Activated CD4-positive, alpha-beta memory T cell treated with anti-CD3 and anti-CD28 coated beads, Interleukin-2, amount 10 ng/mL, durations not matched to agents 7 days and 5 days (primary cell): ENCODE measurements at regions of chr3 and their contacts with region 1.

Region 1: GRCh38 chr3:14203521-14204079 is 25.0 kb downstream of the LSM3 start:
- DNase-seq: peak; percentile 48
- H3K4me3 Mint-ChIP-seq: no peak overlapping the region
- H3K27ac Mint-ChIP-seq: no peak overlapping the region
- H3K4me1 Mint-ChIP-seq: no peaks in the 10 kb centered on the region
- H3K27me3 Mint-ChIP-seq: no peaks in the 10 kb centered on the region

Region 2: GRCh38 chr3:14152242-14152962 is 51.2 kb before region 1 on chr3:
- CTCF ChIA-PET with region 1: interaction called, 12 read pairs
- POLR2A ChIA-PET with region 1: no interaction called
- DNase-seq: no peak
- H3K4me3 Mint-ChIP-seq: no peak overlapping the region
- H3K27ac Mint-ChIP-seq: no peak overlapping the region
- H3K4me1 Mint-ChIP-seq: no peaks in the 10 kb centered on the region
- H3K27me3 Mint-ChIP-seq: no peaks in the 10 kb centered on the region

Region 3: GRCh38 chr3:14188041-14188754 is 15.4 kb before region 1 on chr3:
- CTCF ChIA-PET with region 1: interaction called, 11 read pairs
- POLR2A ChIA-PET with region 1: no interaction called
- DNase-seq: no peak
- H3K4me3 Mint-ChIP-seq: no peak overlapping the region
- H3K27ac Mint-ChIP-seq: no peak overlapping the region
- H3K4me1 Mint-ChIP-seq: peaks cover 37% of the 10 kb centered on the region
- H3K27me3 Mint-ChIP-seq: no peaks in the 10 kb centered on the region

Region 4: DNA sequence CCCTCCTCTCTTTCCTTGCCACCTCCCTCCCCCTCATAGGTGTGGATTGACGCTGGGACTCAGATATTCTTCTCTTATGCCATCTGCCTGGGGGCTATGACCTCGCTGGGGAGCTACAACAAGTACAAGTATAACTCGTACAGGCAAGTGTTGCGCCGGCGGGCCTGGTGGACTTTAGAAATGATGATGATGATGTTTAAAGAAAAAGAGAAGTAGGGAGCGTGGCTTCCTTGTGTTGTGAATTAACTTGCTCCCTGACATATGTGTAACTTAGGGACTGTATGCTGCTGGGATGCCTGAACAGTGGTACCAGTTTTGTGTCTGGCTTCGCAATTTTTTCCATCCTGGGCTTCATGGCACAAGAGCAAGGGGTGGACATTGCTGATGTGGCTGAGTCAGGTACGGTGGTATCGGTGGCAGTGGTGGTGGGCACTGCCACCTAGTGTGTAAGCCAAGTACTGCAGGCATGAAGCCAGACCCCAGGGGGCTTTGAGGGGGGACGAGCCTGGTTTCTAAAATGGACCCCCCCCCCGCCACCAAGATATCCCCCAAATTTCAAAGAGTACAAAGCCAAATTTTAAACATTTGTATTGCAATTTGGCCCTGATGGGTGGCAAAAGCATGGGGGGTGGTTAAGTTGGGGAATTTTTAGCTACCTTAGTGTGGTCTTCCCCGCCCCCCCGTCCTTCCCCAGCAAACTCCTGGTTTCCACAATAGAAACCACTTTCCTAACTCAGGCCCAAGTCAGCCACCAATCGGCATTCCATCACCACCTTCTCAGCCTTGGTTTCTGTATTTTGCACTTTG is 264.4 kb after region 1 on chr3:
- CTCF ChIA-PET with region 1: interaction called, 25 read pairs
- POLR2A ChIA-PET with region 1: no interaction called
- DNase-seq: peak; percentile 46
- H3K4me3 Mint-ChIP-seq: no peak overlapping the region
- H3K27ac Mint-ChIP-seq: no peak overlapping the region
- H3K4me1 Mint-ChIP-seq: peaks cover 5% of the 10 kb centered on the region
- H3K27me3 Mint-ChIP-seq: no peaks in the 10 kb centered on the region